Naive thymus-derived CD4-positive, alpha-beta T cell (primary cell): ENCODE measurements at regions of chr15 and their contacts with region 1.

Region 1: GRCh38 chr15:80776420-80777045 is 2.6 kb upstream of the CEMIP start:
- DNase-seq: peak in 8 of 9 donors; percentile 13 to 66 (median 37)
- ATAC-seq: peak; percentile 78
- H3K4me3 ChIP-seq: no peak overlapping the region
- H3K4me3 Mint-ChIP-seq: no peak overlapping the region
- H3K27ac ChIP-seq: no peak overlapping the region
- H3K27ac Mint-ChIP-seq: no peak overlapping the region
- H3K4me1 ChIP-seq: no peaks in the 10 kb centered on the region
- H3K4me1 Mint-ChIP-seq: peaks cover 8 to 13% (median 8%) of the 10 kb centered on the region in 7 donors
- H3K27me3 ChIP-seq: peaks cover 4 to 17% of the 10 kb centered on the region in 2 donors
- H3K27me3 Mint-ChIP-seq: peaks cover 24 to 50% (median 28%) of the 10 kb centered on the region in 5 donors

Region 2: DNA sequence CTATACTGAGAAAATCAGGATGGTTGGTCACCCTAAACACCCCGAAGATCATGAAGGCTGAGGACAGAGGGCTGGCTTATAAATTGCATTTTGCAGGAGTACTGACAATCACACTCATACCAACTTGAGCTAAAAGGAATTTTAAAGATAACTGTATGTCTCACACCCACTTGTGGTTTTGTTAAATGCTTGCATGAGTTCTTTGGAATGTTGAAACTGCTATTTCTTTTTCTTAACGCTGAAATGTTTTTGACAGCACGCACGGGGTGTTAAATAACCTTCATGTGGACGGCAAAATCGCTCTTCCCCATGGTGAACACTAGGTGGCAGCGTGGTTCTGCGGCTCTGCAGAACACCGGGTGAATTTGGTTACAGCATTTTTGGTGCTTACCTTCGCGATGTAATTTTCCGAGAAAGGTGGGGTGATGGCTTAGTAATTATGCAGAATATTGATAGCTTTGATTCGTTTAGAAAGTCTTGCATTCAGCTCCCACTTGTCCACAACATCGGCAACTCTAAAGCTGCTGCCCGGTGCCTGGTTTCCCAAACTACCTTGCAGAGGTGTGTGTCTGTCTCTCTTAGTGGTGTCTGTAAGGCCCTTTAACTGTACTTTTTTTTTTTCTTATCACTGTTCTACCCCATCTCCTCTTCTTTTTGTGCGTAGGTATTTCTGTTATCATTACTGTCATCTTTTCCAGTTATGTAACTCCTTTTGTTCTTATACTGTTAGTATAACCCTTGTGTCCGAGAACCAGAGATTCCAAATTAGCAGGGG is 320.7 kb before region 1 on chr15:
- CTCF ChIA-PET with region 1: interaction called, 21 read pairs
- POLR2A ChIA-PET with region 1: no interaction called
- intact Hi-C with region 1: loop called in 1 of 2 experiments (anchors 1 kb)
- DNase-seq: peak; percentile 19 to 62 (median 50)
- ATAC-seq: peak; percentile 78
- H3K4me3 ChIP-seq: no peak overlapping the region
- H3K4me3 Mint-ChIP-seq: no peak overlapping the region
- H3K27ac ChIP-seq: no peak overlapping the region
- H3K27ac Mint-ChIP-seq: no peak overlapping the region
- H3K4me1 ChIP-seq: no peaks in the 10 kb centered on the region
- H3K4me1 Mint-ChIP-seq: no peaks in the 10 kb centered on the region
- H3K27me3 ChIP-seq: no peaks in the 10 kb centered on the region
- H3K27me3 Mint-ChIP-seq: peaks cover 0 to 10% (median 6%) of the 10 kb centered on the region in 5 donors

Region 3: DNA sequence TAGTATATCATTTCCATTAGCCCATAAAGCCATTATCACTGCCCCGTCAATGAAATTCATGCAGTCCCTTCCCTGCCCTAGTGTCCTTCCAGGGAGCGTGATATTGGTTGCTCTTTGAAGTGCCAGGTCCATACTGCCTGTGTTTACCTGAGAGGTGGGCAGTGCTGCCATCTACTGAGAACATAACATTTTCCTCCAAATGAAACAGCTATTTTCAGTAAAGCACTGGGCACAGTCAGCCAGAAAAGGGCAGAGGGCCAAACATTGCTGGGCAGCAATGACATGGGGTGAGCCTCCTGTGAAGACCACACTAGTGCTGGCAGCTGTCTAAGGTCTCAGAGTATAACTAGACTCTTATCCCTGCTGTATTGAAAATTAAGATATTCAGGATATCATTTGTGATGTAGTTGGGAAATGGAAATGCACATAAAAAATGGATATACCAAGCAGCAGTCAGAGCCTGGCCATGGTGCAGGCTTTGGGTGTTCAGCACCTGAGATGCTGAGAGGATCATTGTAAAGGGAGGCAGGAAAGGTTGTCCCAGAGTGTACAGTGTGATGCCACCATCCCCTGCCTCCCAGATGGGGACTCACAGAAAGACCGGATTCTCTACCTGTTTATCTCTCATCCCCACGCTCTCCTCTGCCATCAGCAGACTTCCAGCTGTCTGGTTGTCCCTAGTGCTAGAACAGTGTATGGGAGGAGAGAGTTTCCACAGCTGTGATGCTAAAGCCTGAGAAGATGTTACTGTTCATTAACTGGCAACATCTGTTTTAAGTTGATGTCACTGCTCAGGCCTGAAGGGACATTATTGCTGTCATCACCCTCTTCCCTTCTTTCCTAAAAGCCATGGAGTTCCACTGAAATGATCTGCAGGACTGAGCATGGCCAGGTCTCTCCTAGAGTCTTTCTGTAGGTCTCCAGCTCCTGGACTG is 263.5 kb before region 1 on chr15:
- CTCF ChIA-PET with region 1: no interaction called
- POLR2A ChIA-PET with region 1: no interaction called
- intact Hi-C with region 1: no loop called
- DNase-seq: no peak
- ATAC-seq: no peak
- H3K4me3 ChIP-seq: no peak overlapping the region
- H3K4me3 Mint-ChIP-seq: no peak overlapping the region
- H3K27ac ChIP-seq: no peak overlapping the region
- H3K27ac Mint-ChIP-seq: no peak overlapping the region
- H3K4me1 ChIP-seq: no peaks in the 10 kb centered on the region
- H3K4me1 Mint-ChIP-seq: no peaks in the 10 kb centered on the region
- H3K27me3 ChIP-seq: peaks cover 0 to 2% of the 10 kb centered on the region in 2 donors
- H3K27me3 Mint-ChIP-seq: peaks cover 0 to 8% (median 6%) of the 10 kb centered on the region in 5 donors

Region 4: DNA sequence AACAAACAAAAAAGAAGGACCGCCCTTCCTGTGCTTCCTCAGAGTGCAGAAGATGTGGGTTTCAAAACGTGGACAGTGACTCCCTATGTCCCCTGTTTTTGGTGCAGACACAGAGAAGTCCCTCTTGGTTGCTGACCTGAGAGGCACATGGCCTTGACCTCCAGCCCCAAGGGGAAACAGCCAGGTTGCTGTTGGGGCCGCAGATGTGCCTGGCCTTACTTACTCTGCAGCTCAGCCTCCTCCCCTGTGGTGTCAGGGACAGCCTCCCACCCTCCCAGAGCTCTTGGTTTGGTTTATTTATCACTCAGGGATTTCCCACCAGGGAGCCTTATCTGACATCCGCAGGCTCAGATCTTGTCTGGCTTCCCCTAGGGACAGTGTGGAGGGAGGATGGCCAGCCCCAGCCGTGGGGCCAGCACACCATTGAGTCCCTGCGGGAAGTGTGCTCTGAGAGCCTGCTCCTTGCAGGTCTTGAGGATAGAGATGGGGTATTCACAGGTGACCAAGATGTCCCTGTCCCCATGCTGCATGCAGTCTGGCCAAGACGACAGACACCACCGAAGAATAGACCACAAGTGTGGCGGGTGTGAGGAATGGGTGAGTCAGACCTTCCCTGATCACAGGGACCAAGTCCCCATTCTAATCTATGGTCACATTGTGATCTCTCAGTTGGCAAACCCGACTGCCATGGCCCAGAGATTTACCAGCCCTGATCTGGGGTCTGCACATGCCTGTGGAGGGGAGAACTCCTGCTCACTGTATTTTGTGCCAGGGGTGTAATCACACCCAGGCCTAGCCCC is 215.7 kb before region 1 on chr15:
- CTCF ChIA-PET with region 1: no interaction called
- POLR2A ChIA-PET with region 1: no interaction called
- intact Hi-C with region 1: loop called in 1 of 2 experiments (anchors 5 kb)
- DNase-seq: no peak
- ATAC-seq: peak; percentile 10
- H3K4me3 ChIP-seq: no peak overlapping the region
- H3K4me3 Mint-ChIP-seq: no peak overlapping the region
- H3K27ac ChIP-seq: no peak overlapping the region
- H3K27ac Mint-ChIP-seq: no peak overlapping the region
- H3K4me1 ChIP-seq: no peaks in the 10 kb centered on the region
- H3K4me1 Mint-ChIP-seq: no peaks in the 10 kb centered on the region
- H3K27me3 ChIP-seq: no peaks in the 10 kb centered on the region
- H3K27me3 Mint-ChIP-seq: peaks cover 5 to 46% (median 16%) of the 10 kb centered on the region in 5 donors

Region 5: GRCh38 chr15:80567721-80568157 is 208.8 kb before region 1 on chr15:
- CTCF ChIA-PET with region 1: interaction called, 6 read pairs
- POLR2A ChIA-PET with region 1: no interaction called
- intact Hi-C with region 1: loop called (anchors 2 to 5 kb)
- DNase-seq: peak in 4 of 9 donors; percentile 6 to 19 (median 14)
- ATAC-seq: no peak
- H3K4me3 ChIP-seq: no peak overlapping the region
- H3K4me3 Mint-ChIP-seq: no peak overlapping the region
- H3K27ac ChIP-seq: no peak overlapping the region
- H3K27ac Mint-ChIP-seq: no peak overlapping the region
- H3K4me1 ChIP-seq: no peaks in the 10 kb centered on the region
- H3K4me1 Mint-ChIP-seq: no peaks in the 10 kb centered on the region
- H3K27me3 ChIP-seq: no peaks in the 10 kb centered on the region
- H3K27me3 Mint-ChIP-seq: peaks cover 6 to 37% (median 16%) of the 10 kb centered on the region in 5 donors

Region 6: DNA sequence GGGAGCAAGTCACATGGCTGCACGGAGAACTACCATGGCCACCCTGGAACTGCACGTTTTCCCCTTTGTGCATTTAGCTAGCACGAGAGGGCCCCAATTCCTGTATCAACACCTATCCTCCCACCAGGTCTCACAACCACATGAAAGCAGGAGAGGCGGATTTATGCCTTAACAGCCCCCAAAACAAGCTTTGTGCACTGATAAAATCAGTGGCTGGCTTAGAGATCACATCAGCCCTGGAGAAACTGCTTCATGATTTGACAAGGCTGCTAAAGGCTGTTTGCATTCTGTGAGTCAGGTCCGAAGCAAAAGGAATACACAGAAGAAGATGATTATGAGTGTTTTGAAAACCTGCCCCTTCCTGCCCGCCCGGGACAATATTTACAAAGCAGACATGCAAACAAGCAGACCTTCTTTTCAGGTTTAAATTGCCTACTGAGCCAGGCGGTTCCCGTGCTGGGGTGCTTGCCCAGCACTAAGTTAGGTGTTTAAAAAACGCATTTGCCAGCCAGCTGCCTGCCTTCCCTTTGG is 28.5 kb after region 1 on chr15:
- CTCF ChIA-PET with region 1: no interaction called
- POLR2A ChIA-PET with region 1: no interaction called
- intact Hi-C with region 1: loop called in 1 of 2 experiments (anchors 2 kb)
- DNase-seq: peak in 2 of 9 donors; percentile 1 to 36
- ATAC-seq: no peak
- H3K4me3 ChIP-seq: no peak overlapping the region
- H3K4me3 Mint-ChIP-seq: peak overlapping the region; percentile 25 to 63 (median 52)
- H3K27ac ChIP-seq: peak overlapping the region; percentile 36
- H3K27ac Mint-ChIP-seq: peak overlapping the region; percentile 6 to 86 (median 74)
- H3K4me1 ChIP-seq: peaks cover 6 to 13% of the 10 kb centered on the region in 2 donors
- H3K4me1 Mint-ChIP-seq: peaks cover 13 to 38% (median 26%) of the 10 kb centered on the region in 7 donors
- H3K27me3 ChIP-seq: no peaks in the 10 kb centered on the region
- H3K27me3 Mint-ChIP-seq: peaks cover 0 to 4% (median 0%) of the 10 kb centered on the region in 5 donors

Region 7: DNA sequence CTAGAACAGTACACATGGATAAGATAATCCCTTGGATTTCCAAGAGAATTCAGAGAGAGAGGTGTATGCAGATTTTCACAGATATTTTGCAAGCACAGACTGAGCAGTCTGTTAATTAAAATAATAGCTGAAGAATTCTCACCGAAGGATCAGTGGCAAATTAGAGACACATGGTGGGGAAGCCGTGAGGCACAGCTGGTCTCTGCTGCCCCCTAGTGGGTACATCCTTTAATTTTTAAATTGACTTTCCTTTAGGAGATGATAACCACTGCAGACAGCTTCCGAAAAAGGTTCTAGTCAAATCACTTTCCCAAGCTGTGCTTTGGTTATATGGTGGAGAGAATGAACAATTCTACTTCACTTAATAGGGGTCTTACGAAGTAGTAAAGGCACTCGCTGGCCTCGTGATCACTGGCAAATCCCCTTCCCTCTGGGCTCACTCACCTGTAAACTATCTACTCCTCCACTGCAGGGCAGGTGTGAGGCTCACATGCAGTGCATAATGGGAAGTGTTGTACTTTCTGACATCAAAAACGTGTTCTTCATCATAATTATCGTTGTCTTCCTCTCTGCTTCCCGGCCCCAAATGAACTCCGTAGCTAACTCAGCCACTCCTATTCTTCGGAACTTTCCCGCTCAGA is 193.6 kb after region 1 on chr15:
- CTCF ChIA-PET with region 1: interaction called, 4 read pairs
- POLR2A ChIA-PET with region 1: no interaction called
- intact Hi-C with region 1: loop called (anchors 1 to 5 kb)
- DNase-seq: peak; percentile 32 to 76 (median 60)
- ATAC-seq: peak; percentile 82
- H3K4me3 ChIP-seq: no peak overlapping the region
- H3K4me3 Mint-ChIP-seq: no peak overlapping the region
- H3K27ac ChIP-seq: no peak overlapping the region
- H3K27ac Mint-ChIP-seq: peak overlapping the region in 2 of 9 donors; percentile 22 to 45
- H3K4me1 ChIP-seq: no peaks in the 10 kb centered on the region
- H3K4me1 Mint-ChIP-seq: peaks cover 3 to 27% (median 16%) of the 10 kb centered on the region in 7 donors
- H3K27me3 ChIP-seq: no peaks in the 10 kb centered on the region
- H3K27me3 Mint-ChIP-seq: no peaks in the 10 kb centered on the region

Region 8: GRCh38 chr15:81000624-81001151 is 224.2 kb after region 1 on chr15 and contains the start of gene TLNRD1:
- CTCF ChIA-PET with region 1: no interaction called
- POLR2A ChIA-PET with region 1: no interaction called
- intact Hi-C with region 1: no loop called
- DNase-seq: peak; percentile 63 to 90 (median 79)
- ATAC-seq: peak; percentile 81
- H3K4me3 ChIP-seq: peak within 1 kb of the TSS; percentile 83
- H3K4me3 Mint-ChIP-seq: peak within 1 kb of the TSS; percentile 91 to 99 (median 96)
- H3K27ac ChIP-seq: peak within 1 kb of the TSS; percentile 91
- H3K27ac Mint-ChIP-seq: peak within 1 kb of the TSS; percentile 94 to 98 (median 97)
- H3K4me1 ChIP-seq: peaks cover 24 to 36% of the 10 kb centered on the region in 2 donors
- H3K4me1 Mint-ChIP-seq: peaks cover 24 to 66% (median 56%) of the 10 kb centered on the region in 7 donors
- H3K27me3 ChIP-seq: no peaks in the 10 kb centered on the region
- H3K27me3 Mint-ChIP-seq: no peaks in the 10 kb centered on the region
- total RNA-seq, gene TLNRD1: 11.5 to 33.0 (median 22.5) TPM